Pancreas (tissue), 10 donors: ENCODE measurements at regions of chr10 and their contacts with region 1.

Region 1: DNA sequence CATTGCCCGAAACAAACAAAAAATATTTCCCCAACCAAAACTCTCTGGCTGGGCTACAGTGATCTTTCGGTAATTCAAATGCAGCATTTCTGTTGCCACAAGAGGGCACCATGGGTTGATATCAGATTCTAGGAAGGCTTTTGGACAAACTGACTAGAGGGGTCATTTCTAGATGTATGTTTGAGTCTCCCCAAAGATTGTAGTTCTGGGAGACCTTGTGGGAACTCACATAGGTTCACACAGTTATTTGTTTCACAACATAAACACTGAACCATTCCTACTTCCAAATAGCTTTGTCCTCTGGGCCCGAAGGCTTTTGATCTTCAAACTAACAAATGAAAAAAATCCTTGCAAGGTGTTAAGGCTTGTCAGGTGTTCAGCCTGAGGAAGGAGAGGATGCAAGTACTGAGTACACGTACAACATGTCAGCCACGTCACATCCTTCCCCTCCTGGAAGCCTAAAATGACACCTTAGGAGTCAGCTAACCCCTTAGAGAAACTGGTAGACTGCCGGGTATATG is 37.0 kb upstream of the IL15RA start:
- DNase-seq: peak in 3 of 6 donors; percentile 28 to 63 (median 41)
- ATAC-seq: peak; percentile 75 to 84 (median 80)
- H3K4me3 ChIP-seq: no peak overlapping the region
- H3K27ac ChIP-seq: no peak overlapping the region
- H3K4me1 ChIP-seq: peaks cover 0 to under 1% (median 0%) of the 10 kb centered on the region in 3 donors
- H3K27me3 ChIP-seq: no peaks in the 10 kb centered on the region
- CTCF ChIP-seq: peak; percentile 45 to 73 (median 60)

Region 2: GRCh38 chr10:5948999-5949759 is 65.1 kb before region 1 on chr10:
- intact Hi-C with region 1: loop called in 1 of 3 experiments (anchors 10 kb)
- DNase-seq: peak in 3 of 6 donors; percentile 55 to 62 (median 55)
- ATAC-seq: peak in 3 of 4 donors; percentile 39 to 48 (median 46)
- H3K4me3 ChIP-seq: no peak overlapping the region
- H3K27ac ChIP-seq: peak overlapping the region in 3 of 4 donors; percentile 49 to 87 (median 84)
- H3K4me1 ChIP-seq: peaks cover 6 to 27% (median 7%) of the 10 kb centered on the region in 3 donors
- H3K27me3 ChIP-seq: no peaks in the 10 kb centered on the region
- CTCF ChIP-seq: no peak

Region 3: DNA sequence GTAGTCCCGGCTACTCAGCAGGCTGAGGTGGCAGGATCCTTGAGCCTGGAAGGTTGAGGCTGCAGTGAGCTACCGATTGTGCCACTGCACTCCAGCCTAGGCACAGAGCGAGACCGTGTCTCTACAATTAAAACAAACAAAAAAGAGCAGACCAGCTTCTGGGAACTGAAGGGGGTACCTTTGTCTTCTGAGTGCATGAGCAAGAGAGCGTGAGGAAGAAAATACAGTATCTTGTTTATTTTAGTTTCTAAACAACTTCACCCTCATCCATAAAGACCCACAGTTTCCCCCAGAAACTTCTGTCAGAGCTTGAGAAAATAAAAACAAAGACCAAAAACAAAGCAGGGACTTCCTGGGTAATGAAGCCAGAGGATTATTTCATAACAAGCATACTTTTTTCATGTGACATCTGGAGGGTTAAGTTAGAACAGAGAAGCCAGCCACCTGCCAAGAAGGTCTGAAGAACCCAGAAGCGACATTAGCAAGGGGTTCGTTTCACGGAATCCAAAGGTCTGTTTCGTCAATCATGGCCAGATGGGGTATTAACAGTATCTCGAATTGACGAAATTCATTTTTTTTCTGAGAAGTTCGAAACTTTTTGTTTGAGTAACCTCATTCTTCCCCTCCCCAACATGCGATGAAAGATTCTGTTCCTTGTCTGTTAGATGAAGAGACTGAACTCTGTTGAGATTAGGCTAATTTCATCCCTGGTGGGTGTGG is 58.1 kb after region 1 on chr10:
- intact Hi-C with region 1: loop called in 1 of 3 experiments (anchors 10 kb)
- DNase-seq: no peak
- ATAC-seq: peak in 1 of 4 donors; percentile 32
- H3K4me3 ChIP-seq: no peak overlapping the region
- H3K27ac ChIP-seq: no peak overlapping the region
- H3K4me1 ChIP-seq: no peaks in the 10 kb centered on the region
- H3K27me3 ChIP-seq: peaks cover 0 to 4% (median 0%) of the 10 kb centered on the region in 4 donors
- CTCF ChIP-seq: no peak

Region 4: DNA sequence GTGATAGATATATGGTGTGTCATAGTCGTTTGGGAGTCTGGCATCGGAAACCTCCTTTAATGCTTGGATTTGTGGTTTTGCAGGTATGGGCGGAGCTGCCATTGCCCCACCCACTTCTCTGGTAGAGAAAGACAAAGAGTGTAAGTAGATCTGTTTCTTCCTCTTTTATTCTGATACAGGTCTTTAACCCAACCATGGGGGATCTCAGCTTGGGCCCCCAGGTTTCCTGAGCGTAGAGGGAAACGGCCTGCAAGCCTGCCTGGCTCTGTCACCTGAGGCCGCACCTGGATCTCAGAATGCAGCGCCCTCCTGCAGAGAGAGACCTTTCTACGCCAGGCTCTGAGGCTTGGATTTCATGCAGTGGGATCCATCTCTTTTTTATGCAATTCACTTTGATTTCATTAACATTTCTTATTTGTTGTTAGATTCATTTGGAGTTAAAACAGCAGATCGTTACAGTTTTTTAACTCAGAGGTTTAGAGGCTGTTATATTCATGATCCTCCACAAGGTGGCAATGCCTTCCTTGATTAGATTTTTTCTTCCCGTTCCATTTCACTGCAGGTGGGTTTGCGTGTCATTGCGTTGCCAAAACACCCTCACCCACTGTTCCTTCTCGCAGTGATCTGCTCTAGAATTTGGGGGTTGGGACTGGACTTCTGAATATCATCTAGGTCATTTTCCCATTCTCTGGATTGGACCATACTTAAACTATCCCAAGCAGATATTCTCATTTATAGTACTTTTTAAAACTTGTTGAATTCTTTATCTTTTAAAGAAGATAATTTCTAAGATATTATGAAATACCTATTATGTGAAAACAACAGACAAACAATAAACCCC is 94.5 kb after region 1 on chr10:
- intact Hi-C with region 1: no loop called
- DNase-seq: no peak
- ATAC-seq: peak; percentile 57 to 87 (median 82)
- H3K4me3 ChIP-seq: no peak overlapping the region
- H3K27ac ChIP-seq: no peak overlapping the region
- H3K4me1 ChIP-seq: no peaks in the 10 kb centered on the region
- H3K27me3 ChIP-seq: no peaks in the 10 kb centered on the region
- CTCF ChIP-seq: peak; percentile 43 to 67 (median 52)

Region 5: DNA sequence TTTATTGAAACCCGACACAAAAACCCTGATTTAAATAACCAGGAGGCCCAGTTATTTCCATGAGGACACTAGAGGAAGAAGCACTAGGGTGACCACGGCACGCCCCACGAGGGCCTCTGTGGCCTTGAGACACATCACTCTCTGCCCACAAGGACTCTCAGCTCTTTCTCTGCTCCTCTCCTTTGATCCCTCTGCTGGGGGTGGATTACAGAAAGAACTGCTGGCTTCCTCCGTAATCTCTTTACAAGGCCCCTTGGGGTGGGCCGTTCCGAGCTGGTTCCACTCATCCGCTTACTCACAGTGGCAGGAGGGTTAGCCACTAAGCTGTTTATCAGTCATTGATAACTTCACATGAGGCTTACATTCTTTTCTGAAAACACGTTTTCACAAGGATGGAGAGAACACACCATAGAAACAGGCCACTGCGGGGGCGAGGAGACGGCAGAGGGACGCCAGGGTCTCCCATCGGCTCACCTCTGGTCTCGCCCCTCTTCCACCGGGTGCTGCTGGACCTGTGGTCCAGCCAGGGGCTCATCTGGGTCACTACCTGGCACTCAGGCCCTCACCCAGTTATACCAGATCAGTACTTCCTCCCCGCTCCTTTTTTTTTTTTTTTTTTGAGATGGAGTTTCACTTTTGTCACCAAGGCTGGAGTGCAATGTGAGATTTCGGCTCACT is 170.9 kb after region 1 on chr10:
- intact Hi-C with region 1: no loop called
- DNase-seq: no peak
- ATAC-seq: no peak
- H3K4me3 ChIP-seq: no peak overlapping the region
- H3K27ac ChIP-seq: no peak overlapping the region
- H3K4me1 ChIP-seq: peaks cover 0 to 5% (median 0%) of the 10 kb centered on the region in 3 donors
- H3K27me3 ChIP-seq: no peaks in the 10 kb centered on the region
- CTCF ChIP-seq: no peak